Calu3 (cell line): ENCODE measurements at regions of chr15 and their contacts with region 1.

Region 1: DNA sequence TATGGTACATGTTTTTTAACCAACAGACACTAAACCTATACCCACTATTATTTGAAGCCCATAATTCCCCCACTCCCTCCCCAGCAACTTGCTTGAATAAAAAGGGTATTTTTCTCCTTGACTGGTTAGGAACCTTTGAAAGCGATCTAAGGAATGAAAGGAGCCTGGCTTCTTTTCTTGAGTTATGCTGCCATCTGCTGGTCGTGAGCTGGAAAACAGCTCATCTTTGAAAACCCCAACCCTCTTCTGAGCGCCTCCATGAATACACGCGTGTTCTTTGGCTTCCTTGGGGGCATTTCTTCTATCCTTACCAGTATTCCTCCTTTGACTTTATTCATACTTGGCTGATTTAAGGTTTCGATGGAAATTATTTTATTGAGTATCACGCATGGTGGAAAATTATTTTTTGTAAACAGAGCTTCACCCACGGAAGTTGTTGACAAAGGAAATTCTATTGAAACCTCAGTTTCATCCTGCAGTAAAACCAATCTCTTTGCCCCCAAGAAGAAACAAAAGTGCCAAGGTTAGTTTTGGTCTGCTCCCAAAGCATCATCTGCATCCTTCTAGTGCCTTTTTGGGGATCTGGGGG is 171.6 kb downstream of the SV2B start:
- DNase-seq: peak; percentile 67
- H3K4me3 Mint-ChIP-seq: no peak overlapping the region
- H3K27ac Mint-ChIP-seq: no peak overlapping the region
- H3K4me1 Mint-ChIP-seq: no peaks in the 10 kb centered on the region
- H3K27me3 Mint-ChIP-seq: peaks cover 68% of the 10 kb centered on the region
- CTCF ChIP-seq: peak; percentile 78

Region 2: GRCh38 chr15:90648137-90649070 is 623.3 kb before region 1 on chr15:
- CTCF ChIA-PET with region 1: no interaction called
- intact Hi-C with region 1: loop called (anchors 5 kb)
- DNase-seq: peak; percentile 61
- H3K4me3 Mint-ChIP-seq: peak overlapping the region; percentile 42
- H3K27ac Mint-ChIP-seq: peak overlapping the region; percentile 82
- H3K4me1 Mint-ChIP-seq: peaks cover 9% of the 10 kb centered on the region
- H3K27me3 Mint-ChIP-seq: no peaks in the 10 kb centered on the region
- CTCF ChIP-seq: peak; percentile 90

Region 3: GRCh38 chr15:90954712-90955671 is 316.7 kb before region 1 on chr15 and contains the start of gene RCCD1:
- CTCF ChIA-PET with region 1: interaction called, 3 read pairs
- intact Hi-C with region 1: loop called (anchors 10 kb)
- DNase-seq: peak; percentile 97
- H3K4me3 Mint-ChIP-seq: peak within 1 kb of the TSS; percentile 92
- H3K27ac Mint-ChIP-seq: peak within 1 kb of the TSS; percentile 78
- H3K4me1 Mint-ChIP-seq: no peaks in the 10 kb centered on the region
- H3K27me3 Mint-ChIP-seq: no peaks in the 10 kb centered on the region
- CTCF ChIP-seq: no peak
- total RNA-seq, gene RCCD1: 39.3 and 42.6 TPM in 2 replicates

Region 4: GRCh38 chr15:91055548-91056331 is 215.9 kb before region 1 on chr15:
- CTCF ChIA-PET with region 1: interaction called, 40 read pairs
- intact Hi-C with region 1: loop called (anchors 1 kb)
- DNase-seq: peak; percentile 81
- H3K4me3 Mint-ChIP-seq: no peak overlapping the region
- H3K27ac Mint-ChIP-seq: no peak overlapping the region
- H3K4me1 Mint-ChIP-seq: peaks cover 9% of the 10 kb centered on the region
- H3K27me3 Mint-ChIP-seq: peaks cover 97% of the 10 kb centered on the region
- CTCF ChIP-seq: peak; percentile 62

Region 5: GRCh38 chr15:91224755-91225380 is 46.8 kb before region 1 on chr15:
- CTCF ChIA-PET with region 1: interaction called, 6 read pairs
- intact Hi-C with region 1: loop called (anchors 2 kb)
- DNase-seq: peak; percentile 72
- H3K4me3 Mint-ChIP-seq: no peak overlapping the region
- H3K27ac Mint-ChIP-seq: no peak overlapping the region
- H3K4me1 Mint-ChIP-seq: no peaks in the 10 kb centered on the region
- H3K27me3 Mint-ChIP-seq: peaks cover 98% of the 10 kb centered on the region
- CTCF ChIP-seq: peak; percentile 64

Region 6: GRCh38 chr15:91258425-91258779 is 13.3 kb before region 1 on chr15:
- CTCF ChIA-PET with region 1: interaction called, 10 read pairs
- intact Hi-C with region 1: no loop called
- DNase-seq: peak; percentile 9
- H3K4me3 Mint-ChIP-seq: no peak overlapping the region
- H3K27ac Mint-ChIP-seq: no peak overlapping the region
- H3K4me1 Mint-ChIP-seq: no peaks in the 10 kb centered on the region
- H3K27me3 Mint-ChIP-seq: peaks cover 43% of the 10 kb centered on the region
- CTCF ChIP-seq: peak; percentile 32